Transverse colon (tissue), 4 donors: ENCODE measurements at regions of chr6 and their contacts with region 1.

Region 1: GRCh38 chr6:25278914-25279747 is at the start of gene CARMIL1:
- DNase-seq: peak; percentile 94
- H3K4me3 ChIP-seq: peak within 1 kb of the TSS; percentile 63 to 94 (median 78)
- H3K27ac ChIP-seq: peak within 1 kb of the TSS; percentile 82 to 92 (median 84)
- H3K4me1 ChIP-seq: peaks cover 11 to 48% (median 19%) of the 10 kb centered on the region in 4 donors
- H3K27me3 ChIP-seq: peaks cover 3% of the 10 kb centered on the region
- CTCF ChIP-seq: peak; percentile 61 to 75 (median 66)
- EP300 ChIP-seq: no peak
- POLR2A ChIP-seq: peak; percentile 77
- total RNA-seq, gene CARMIL1: 25.1 to 93.5 (median 61.0) TPM

Region 2: GRCh38 chr6:25354078-25354932 is 75.2 kb after region 1 on chr6:
- in situ Hi-C with region 1: no loop called
- intact Hi-C with region 1: no loop called
- DNase-seq: no peak
- H3K4me3 ChIP-seq: no peak overlapping the region
- H3K27ac ChIP-seq: no peak overlapping the region
- H3K4me1 ChIP-seq: peaks cover 4 to 34% (median 17%) of the 10 kb centered on the region in 4 donors
- H3K27me3 ChIP-seq: no peaks in the 10 kb centered on the region
- CTCF ChIP-seq: no peak
- EP300 ChIP-seq: no peak
- POLR2A ChIP-seq: no peak

Region 3: GRCh38 chr6:25601800-25602673 is 322.9 kb after region 1 on chr6:
- in situ Hi-C with region 1: loop called in 1 of 4 experiments (anchors 25 kb)
- intact Hi-C with region 1: loop called (anchors 10 kb)
- DNase-seq: no peak
- H3K4me3 ChIP-seq: no peak overlapping the region
- H3K27ac ChIP-seq: peak overlapping the region in 1 of 4 donors; percentile 23
- H3K4me1 ChIP-seq: peaks cover 0 to 10% (median 0%) of the 10 kb centered on the region in 4 donors
- H3K27me3 ChIP-seq: no peaks in the 10 kb centered on the region
- CTCF ChIP-seq: peak; percentile 39 to 58 (median 49)
- EP300 ChIP-seq: no peak
- POLR2A ChIP-seq: no peak